ENCODE measurements at regions of chr15 and their contacts with region 1.

Region 1: GRCh38 chr15:43510200-43511011 is 7.0 kb upstream of the MAP1A start:
- DNase-seq: peak; percentile 96
- H3K4me3 Mint-ChIP-seq: peak overlapping the region; percentile 85
- H3K27ac Mint-ChIP-seq: peak overlapping the region; percentile 24
- H3K4me1 Mint-ChIP-seq: peaks cover 22% of the 10 kb centered on the region
- H3K27me3 Mint-ChIP-seq: peaks cover under 1% of the 10 kb centered on the region

Region 2: DNA sequence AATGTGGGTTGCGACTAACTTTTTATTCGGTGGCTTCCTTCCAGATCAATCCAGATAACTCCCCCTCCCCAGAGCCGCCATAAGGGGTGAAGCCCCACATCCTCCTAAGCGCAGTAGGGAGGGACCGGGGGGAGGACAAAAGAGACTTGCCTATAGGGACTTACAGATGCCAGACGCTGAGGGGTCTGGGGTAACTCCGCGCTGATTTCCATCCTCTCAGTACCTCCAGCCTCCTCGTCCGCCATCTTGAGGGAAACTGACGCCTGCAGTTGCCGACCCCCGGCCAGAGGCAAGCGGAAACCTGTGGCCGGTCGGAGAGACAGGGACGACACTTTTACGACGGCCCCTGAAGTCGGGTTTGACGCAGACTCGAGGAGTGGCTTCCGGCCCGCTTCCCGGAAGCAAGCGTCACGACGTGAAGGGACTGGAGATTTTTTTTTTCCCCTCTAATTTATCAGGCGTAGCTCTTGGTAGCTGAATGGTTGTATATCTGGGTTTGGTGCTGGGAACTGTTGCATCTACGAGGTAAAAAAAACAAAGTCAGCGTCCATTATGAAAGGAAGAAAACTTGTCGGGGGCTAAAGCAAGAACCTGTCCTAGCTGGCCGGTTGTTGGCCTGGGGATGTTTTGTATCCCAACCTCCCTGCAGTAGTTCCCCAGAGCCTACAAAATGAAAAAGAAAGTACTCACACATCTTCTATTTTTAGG is 404.5 kb before region 1 on chr15 and contains the start of gene UBR1:
- CTCF ChIA-PET with region 1: no interaction called
- intact Hi-C with region 1: loop called (anchors 10 kb)
- DNase-seq: peak; percentile 95
- H3K4me3 Mint-ChIP-seq: peak within 1 kb of the TSS; percentile 95
- H3K27ac Mint-ChIP-seq: peak within 1 kb of the TSS; percentile 95
- H3K4me1 Mint-ChIP-seq: peaks cover 39% of the 10 kb centered on the region
- H3K27me3 Mint-ChIP-seq: no peaks in the 10 kb centered on the region
- total RNA-seq, gene UBR1: 25.2 to 25.9 TPM

Region 3: DNA sequence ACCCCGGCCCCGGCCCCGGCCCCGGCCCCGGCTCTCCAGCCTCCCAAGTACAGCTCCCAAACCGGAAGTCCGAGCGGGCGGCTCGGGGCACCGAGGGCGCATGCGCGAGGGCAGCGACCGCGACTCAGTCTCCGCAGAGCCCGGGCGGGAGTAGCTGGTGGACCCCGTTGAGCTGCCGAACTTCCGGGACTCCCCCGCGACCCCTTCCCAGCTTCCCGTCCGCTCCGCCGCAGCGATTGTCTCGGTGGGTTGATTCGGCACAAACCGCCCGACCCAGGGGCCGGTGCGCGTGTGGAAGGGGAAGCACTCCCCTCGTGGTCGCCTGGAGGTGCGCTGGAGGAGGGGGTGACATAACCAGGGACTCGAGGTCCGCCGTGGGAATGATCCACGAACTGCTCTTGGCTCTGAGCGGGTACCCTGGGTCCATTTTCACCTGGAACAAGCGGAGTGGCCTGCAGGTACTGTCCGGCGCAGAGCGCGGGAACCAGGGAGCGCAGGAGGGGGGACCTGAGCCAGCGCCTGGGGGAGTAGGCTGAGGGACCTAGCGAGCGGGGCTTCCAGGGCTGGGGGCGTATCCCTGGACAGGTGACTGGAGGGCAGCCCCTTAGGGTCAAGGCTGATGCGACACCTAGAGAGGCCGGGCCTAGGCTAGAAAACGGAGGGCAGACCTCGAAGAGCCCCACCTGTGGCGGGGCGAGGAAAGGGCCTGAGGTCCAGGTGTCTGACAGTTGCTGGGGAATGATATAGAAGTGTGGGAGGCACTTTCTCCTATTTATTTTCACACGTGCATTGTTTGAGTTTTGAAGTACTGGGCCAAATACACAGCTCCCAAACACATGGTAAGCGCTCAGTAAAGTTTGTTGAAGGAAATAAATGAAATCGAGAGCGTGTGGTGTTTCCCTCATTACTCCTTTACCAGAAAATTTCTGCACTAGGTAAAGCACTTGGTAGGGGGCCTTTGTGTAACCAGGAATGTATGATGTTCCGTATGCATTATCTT is 139.1 kb before region 1 on chr15 and contains the starts of genes TUBGCP4 and ZSCAN29:
- CTCF ChIA-PET with region 1: interaction called, 8 read pairs
- intact Hi-C with region 1: loop called (anchors 5 kb)
- DNase-seq: peak; percentile 76
- H3K4me3 Mint-ChIP-seq: peak within 1 kb of the TSS; percentile 87
- H3K27ac Mint-ChIP-seq: peak within 1 kb of the TSS; percentile 76
- H3K4me1 Mint-ChIP-seq: peaks cover 42% of the 10 kb centered on the region
- H3K27me3 Mint-ChIP-seq: no peaks in the 10 kb centered on the region
- total RNA-seq, gene TUBGCP4: 34.5 to 35.3 TPM
- total RNA-seq, gene ZSCAN29: 13.6 to 13.9 TPM

Region 4: DNA sequence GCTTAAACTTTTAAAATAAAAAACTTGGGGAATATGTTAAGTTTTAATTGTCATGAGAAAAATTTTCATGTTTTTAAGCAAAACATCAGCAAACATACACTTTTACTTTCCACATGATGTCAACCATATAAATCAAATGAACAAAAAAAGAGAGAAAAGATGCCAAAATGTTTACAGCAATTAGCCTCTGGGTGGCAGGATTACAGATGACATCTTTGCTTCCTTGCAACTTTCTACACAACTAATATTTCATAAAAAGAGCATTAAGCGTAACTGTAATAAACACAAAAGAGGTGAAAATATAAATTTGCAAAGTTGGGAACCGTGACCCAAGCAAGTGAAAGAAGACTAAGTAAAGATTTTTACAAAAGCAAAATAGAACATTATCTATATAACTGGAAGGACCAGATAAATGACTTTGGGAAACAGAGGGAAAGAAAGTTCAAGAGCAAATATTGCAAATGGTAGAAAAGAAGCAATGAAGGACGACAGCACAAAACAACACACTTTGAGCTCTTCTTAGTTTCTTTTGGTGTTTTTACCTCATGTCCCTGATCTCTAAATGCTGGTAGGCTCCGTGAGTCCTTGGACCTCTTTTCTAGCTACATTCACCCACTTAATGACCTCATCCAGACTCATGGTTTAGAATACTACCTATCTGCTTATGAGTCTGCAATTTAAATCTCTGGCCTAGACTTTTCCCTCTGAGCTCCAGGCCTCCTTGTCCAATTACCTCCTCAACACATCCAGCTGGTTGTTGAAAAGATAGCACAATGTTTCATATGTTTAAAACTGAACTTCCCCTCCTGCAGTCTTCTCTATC is 26.9 kb before region 1 on chr15:
- CTCF ChIA-PET with region 1: interaction called, 12 read pairs
- intact Hi-C with region 1: loop called (anchors 2 kb)
- DNase-seq: no peak
- H3K4me3 Mint-ChIP-seq: no peak overlapping the region
- H3K27ac Mint-ChIP-seq: no peak overlapping the region
- H3K4me1 Mint-ChIP-seq: peaks cover 8% of the 10 kb centered on the region
- H3K27me3 Mint-ChIP-seq: no peaks in the 10 kb centered on the region

Region 5: DNA sequence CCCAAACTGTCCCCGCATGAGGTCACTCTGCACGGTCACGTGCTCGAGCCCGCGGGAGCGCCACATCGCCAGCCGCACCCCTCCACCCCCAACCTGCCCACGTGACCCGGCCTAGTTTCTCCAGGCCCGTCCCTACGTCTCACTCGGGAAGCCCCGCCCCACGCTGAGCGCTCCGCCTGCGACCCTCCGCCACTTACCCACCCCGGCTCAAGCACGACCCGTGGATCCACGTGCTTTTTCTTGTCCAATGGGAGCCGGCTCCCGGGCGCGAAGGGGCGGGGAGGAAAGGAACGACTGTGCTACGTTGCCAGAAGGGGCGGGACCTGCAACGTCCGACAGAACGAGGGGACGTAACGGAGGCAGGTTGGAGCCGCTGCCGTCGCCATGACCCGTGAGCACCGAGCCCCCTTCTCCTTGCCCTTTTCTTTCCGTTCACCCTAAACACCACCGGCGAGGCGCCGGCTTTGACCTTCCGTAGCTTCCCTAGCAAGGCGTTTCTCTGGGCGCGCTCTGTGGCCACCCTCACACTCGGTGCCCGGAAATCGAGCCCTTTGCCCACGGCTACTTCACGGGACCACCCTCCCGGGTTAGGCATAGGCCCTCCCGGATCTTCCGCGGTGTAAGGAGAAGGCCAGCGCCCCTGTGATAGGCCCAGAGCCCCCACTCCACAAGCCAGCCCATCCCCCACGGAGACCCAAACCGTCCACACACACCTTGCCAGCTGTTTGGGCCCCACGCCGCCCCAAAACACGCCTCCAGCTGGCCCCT is 281.8 kb after region 1 on chr15 and contains the start of gene SERF2:
- CTCF ChIA-PET with region 1: no interaction called
- intact Hi-C with region 1: loop called (anchors 1 kb)
- DNase-seq: peak; percentile 100
- H3K4me3 Mint-ChIP-seq: peak within 1 kb of the TSS; percentile 90
- H3K27ac Mint-ChIP-seq: peak within 1 kb of the TSS; percentile 92
- H3K4me1 Mint-ChIP-seq: peaks cover 39% of the 10 kb centered on the region
- H3K27me3 Mint-ChIP-seq: no peaks in the 10 kb centered on the region
- total RNA-seq, gene SERF2: 781 to 808 TPM

Measured in activated naive CD4-positive, alpha-beta T cell treated with anti-CD3 and anti-CD28 coated beads for 36 hours (primary cell).